ENCODE measurements at regions of chr18 and their contacts with region 1.

Region 1: DNA sequence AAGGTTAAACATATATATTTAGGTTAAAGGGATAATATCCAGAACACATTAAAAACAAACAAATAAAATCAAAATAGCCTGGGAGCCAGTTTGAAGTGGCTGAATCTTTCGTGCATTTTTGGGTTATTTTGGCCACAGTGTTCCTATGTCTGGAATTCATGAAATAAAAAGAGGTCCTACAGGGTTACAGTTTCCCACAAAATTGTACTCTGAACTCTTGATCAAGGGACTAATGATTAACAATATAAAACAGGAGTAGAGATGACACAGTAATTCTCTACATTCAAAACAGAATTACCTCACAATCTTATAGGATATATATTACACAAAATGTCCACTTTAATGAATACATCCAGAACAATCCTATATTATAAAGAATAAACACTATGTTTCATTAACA is 24.9 kb downstream of the VPS4B start:
- DNase-seq: no peak
- ATAC-seq: no peak
- H3K4me3 ChIP-seq: no peak overlapping the region
- H3K4me3 Mint-ChIP-seq: no peak overlapping the region
- H3K27ac ChIP-seq: no peak overlapping the region
- H3K27ac Mint-ChIP-seq: no peak overlapping the region
- H3K4me1 ChIP-seq: no peaks in the 10 kb centered on the region
- H3K4me1 Mint-ChIP-seq: peaks cover 10% of the 10 kb centered on the region
- H3K27me3 ChIP-seq: no peaks in the 10 kb centered on the region
- H3K27me3 Mint-ChIP-seq: no peaks in the 10 kb centered on the region
- CTCF ChIP-seq: no peak

Region 2: DNA sequence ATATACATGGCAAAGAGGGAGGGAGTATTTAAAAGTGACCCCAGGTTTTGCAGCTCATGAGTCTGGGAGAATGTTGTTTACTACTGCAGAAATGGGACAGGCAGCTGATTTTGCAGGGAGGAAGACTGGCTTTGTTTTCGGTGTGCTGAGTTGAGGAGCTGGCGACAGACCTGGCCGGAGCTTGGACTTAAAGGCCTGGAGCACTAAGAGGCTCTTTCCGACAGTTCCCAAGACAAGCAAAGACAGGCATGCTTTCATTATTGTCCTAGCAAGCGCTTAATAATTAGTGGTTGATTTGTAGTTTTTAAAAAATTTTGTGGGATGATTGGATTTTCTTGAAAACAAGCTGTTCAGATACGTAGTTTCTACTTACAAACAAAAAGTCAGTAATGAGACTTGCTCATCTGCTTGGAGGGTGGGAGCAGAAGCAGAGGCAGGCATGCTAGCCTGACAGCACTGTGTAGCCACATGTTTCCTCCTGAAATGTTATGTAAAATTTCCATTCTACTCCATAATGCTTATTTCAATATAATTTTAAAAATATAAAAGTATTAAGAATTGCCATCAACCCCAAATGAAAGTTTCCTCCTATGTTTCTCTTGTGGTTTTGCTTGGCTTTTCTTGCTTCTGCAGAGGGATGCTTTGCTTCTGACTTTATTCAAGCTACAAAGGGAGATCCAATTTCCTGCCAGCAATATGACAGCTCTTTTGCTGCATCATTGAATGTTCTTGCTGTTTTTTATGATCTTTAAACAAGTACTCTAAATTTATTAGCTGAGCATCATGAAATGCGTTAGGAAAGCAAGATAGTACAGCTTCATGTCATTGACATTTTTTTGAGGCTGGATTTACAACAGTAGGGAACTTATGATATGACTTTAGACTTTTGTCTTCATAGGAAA is 606.2 kb before region 1 on chr18:
- CTCF ChIA-PET with region 1: no interaction called
- POLR2A ChIA-PET with region 1: no interaction called
- intact Hi-C with region 1: no loop called
- DNase-seq: peak in 1 of 9 experiments; percentile 12
- ATAC-seq: no peak
- H3K4me3 ChIP-seq: no peak overlapping the region
- H3K4me3 Mint-ChIP-seq: no peak overlapping the region
- H3K27ac ChIP-seq: no peak overlapping the region
- H3K27ac Mint-ChIP-seq: no peak overlapping the region
- H3K4me1 ChIP-seq: peaks cover 10% of the 10 kb centered on the region
- H3K4me1 Mint-ChIP-seq: peaks cover 38% of the 10 kb centered on the region
- H3K27me3 ChIP-seq: no peaks in the 10 kb centered on the region
- H3K27me3 Mint-ChIP-seq: peaks cover 2% of the 10 kb centered on the region
- CTCF ChIP-seq: no peak

Region 3: GRCh38 chr18:62999392-62999791 is 398.0 kb before region 1 on chr18:
- CTCF ChIA-PET with region 1: no interaction called
- POLR2A ChIA-PET with region 1: no interaction called
- intact Hi-C with region 1: no loop called
- DNase-seq: no peak
- ATAC-seq: no peak
- H3K4me3 ChIP-seq: no peak overlapping the region
- H3K4me3 Mint-ChIP-seq: no peak overlapping the region
- H3K27ac ChIP-seq: no peak overlapping the region
- H3K27ac Mint-ChIP-seq: no peak overlapping the region
- H3K4me1 ChIP-seq: no peaks in the 10 kb centered on the region
- H3K4me1 Mint-ChIP-seq: no peaks in the 10 kb centered on the region
- H3K27me3 ChIP-seq: no peaks in the 10 kb centered on the region
- H3K27me3 Mint-ChIP-seq: no peaks in the 10 kb centered on the region
- CTCF ChIP-seq: no peak

Region 4: GRCh38 chr18:63376538-63376937 is 20.8 kb before region 1 on chr18:
- CTCF ChIA-PET with region 1: interaction called, 3 read pairs
- POLR2A ChIA-PET with region 1: no interaction called
- intact Hi-C with region 1: loop called in 1 of 2 experiments (anchors 2 kb)
- DNase-seq: no peak
- ATAC-seq: no peak
- H3K4me3 ChIP-seq: no peak overlapping the region
- H3K4me3 Mint-ChIP-seq: no peak overlapping the region
- H3K27ac ChIP-seq: no peak overlapping the region
- H3K27ac Mint-ChIP-seq: no peak overlapping the region
- H3K4me1 ChIP-seq: no peaks in the 10 kb centered on the region
- H3K4me1 Mint-ChIP-seq: peaks cover 10% of the 10 kb centered on the region
- H3K27me3 ChIP-seq: no peaks in the 10 kb centered on the region
- H3K27me3 Mint-ChIP-seq: no peaks in the 10 kb centered on the region
- CTCF ChIP-seq: no peak